ENCODE measurements at regions of chr3 and their contacts with region 1.

Region 1: DNA sequence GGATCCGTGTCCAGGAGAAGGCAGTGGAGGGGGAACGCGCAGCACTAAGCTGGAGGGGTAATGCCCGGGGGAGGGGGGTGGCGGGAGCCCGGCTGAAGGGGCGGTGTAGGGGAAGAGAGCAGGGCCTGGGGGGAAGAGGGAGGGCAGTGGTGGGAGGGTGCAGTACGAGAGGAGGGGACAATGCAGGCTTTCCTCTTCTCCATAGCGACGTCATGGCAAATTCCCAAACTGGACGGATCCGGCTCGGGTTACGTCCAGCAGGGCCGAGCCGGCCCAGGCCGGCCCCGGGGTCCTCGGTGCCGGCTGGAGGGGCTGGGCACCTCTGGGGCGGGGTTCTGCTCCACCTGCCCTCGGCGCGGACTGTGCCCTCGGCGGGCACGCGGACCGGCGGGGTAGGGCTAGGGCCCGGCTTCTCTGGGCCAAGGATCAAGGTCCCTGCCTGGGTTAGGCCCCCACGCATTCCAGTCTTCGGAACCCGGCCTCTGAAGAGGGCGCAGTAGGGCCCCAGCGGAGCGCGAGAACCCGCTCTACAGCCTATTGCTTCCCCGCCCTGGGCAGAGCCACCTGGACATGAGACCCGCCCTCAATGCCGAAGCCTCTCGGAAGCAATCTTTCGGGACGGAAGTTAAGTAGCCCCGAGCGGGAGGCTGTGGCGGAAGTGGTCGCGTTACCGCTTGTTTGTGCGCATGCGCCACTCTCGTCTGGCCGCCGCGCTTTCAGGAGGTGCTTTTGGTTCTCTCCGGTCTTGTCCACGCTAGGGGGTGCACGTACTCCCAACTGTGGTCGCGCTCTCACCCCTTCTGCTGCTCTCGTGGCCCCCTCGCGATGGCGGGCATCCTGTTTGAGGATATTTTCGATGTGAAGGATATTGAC is 1.4 kb downstream of the POLR2H start:
- DNase-seq: peak; percentile 99
- H3K4me3 ChIP-seq: peak overlapping the region; percentile 85
- H3K27ac ChIP-seq: peak overlapping the region; percentile 95
- H3K4me1 ChIP-seq: peaks cover 22% of the 10 kb centered on the region
- H3K27me3 ChIP-seq: no peaks in the 10 kb centered on the region
- CTCF ChIP-seq: peak; percentile 73

Region 2: DNA sequence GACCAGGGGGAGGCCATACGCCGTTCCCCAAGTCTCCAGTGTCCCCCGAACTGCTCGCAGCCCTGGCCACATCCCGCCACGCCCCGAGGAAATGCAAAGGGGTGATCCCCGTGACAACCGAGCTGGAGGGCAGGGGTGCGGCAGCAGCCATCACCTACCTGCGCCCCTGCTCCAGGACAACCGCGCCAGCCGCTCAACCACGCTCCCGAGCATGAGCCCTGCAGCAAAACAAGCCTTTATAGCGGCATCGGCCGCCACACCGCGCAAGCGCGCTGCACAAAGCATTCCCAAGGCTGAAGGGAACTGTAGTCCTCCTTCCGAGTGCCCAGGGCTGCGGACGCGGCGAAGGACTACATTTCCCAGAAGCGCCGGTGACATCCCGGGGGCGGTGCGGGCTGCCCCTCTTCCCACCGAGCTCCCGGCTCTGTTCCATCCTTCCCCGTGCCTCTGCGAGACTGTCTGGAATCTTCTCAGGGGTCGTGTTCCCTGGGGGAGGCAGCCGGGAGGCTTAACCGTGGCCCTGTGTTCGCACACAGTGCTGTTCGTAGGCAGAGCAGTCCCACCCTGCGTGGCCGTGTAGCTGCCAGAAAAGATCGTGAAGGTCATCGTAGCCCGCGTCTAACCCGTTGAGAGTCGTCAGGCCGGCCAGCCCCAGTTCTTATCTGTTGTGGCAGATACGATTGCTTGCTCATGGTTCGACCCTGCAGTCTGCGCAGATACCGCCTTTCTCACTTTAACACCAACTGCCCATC is 345.1 kb before region 1 on chr3 and contains the start of gene ABCC5:
- CTCF ChIA-PET with region 1: no interaction called
- POLR2A ChIA-PET with region 1: no interaction called
- intact Hi-C with region 1: loop called (anchors 5 kb)
- DNase-seq: peak; percentile 87 to 94
- H3K4me3 ChIP-seq: peak within 1 kb of the TSS; percentile 99
- H3K27ac ChIP-seq: peak within 1 kb of the TSS; percentile 58
- H3K4me1 ChIP-seq: peaks cover 34% of the 10 kb centered on the region
- H3K27me3 ChIP-seq: no peaks in the 10 kb centered on the region
- CTCF ChIP-seq: peak; percentile 83
- total RNA-seq, gene ABCC5: 133 and 151 TPM in 2 replicates

Region 3: DNA sequence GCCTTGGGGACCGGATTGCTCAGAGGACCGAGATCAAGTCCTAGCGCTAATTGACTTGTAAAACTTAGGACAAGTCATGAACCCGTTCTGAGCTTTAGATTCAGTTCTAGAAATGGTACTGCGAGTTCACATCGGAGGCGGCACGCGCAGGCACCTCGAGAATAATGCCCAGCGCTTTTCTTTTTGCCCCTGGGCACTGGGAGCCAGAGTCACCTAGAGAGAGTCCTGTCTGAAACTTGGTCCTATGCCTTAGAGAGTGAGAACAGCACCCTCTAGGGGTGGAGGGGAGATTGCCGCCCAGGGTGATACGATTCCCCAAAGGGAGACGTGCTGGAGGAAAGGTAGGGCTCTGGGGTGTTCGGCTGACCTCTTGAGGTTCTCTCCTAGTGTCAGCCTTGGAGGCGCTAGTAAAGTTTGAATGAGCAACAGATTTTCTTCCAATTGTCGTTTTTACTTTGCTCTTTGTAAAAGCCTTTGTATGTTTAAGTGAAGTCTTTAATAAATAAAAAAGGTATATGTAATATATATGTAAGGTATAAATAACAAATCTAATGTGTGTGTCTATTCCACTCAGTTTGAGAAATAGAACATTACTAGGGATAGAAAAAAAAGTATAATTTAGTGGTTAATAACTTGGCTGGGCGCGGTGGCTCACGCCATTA is 112.6 kb before region 1 on chr3:
- CTCF ChIA-PET with region 1: no interaction called
- POLR2A ChIA-PET with region 1: no interaction called
- intact Hi-C with region 1: loop called (anchors 2 kb)
- DNase-seq: peak; percentile 92 to 97
- H3K4me3 ChIP-seq: peak overlapping the region; percentile 96
- H3K27ac ChIP-seq: peak overlapping the region; percentile 90
- H3K4me1 ChIP-seq: peaks cover 18% of the 10 kb centered on the region
- H3K27me3 ChIP-seq: no peaks in the 10 kb centered on the region
- CTCF ChIP-seq: peak; percentile 97

Region 4: DNA sequence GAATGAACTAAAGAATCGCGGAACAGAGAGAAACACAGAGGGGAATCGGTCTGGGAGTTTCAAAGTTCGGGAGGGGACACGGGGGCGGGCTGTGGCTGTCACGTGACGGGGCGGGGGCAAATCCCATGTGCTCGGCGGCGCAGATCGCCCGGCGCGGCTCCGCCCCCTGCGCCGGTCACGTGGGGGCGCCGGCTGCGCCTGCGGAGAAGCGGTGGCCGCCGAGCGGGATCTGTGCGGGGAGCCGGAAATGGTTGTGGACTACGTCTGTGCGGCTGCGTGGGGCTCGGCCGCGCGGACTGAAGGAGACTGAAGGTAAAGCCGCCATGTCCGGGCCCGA is 48.6 kb before region 1 on chr3 and contains the start of gene EIF4G1:
- CTCF ChIA-PET with region 1: no interaction called
- POLR2A ChIA-PET with region 1: interaction called, 18 read pairs
- intact Hi-C with region 1: loop called (anchors 1 kb)
- DNase-seq: peak; percentile 82 to 98
- H3K4me3 ChIP-seq: peak within 1 kb of the TSS; percentile 63
- H3K27ac ChIP-seq: peak within 1 kb of the TSS; percentile 84
- H3K4me1 ChIP-seq: peaks cover 43% of the 10 kb centered on the region
- H3K27me3 ChIP-seq: no peaks in the 10 kb centered on the region
- CTCF ChIP-seq: no peak
- total RNA-seq, gene EIF4G1: 657 and 721 TPM in 2 replicates

Region 5: GRCh38 chr3:184335661-184336546 is 27.0 kb before region 1 on chr3:
- CTCF ChIA-PET with region 1: no interaction called
- POLR2A ChIA-PET with region 1: interaction called, 3 read pairs
- intact Hi-C with region 1: loop called (anchors 1 kb)
- DNase-seq: peak; percentile 53 to 89
- H3K4me3 ChIP-seq: peak overlapping the region; percentile 68
- H3K27ac ChIP-seq: peak overlapping the region; percentile 73
- H3K4me1 ChIP-seq: peaks cover 55% of the 10 kb centered on the region
- H3K27me3 ChIP-seq: no peaks in the 10 kb centered on the region
- CTCF ChIP-seq: no peak

Region 6: GRCh38 chr3:184380191-184380626 is 17.3 kb after region 1 on chr3:
- CTCF ChIA-PET with region 1: interaction called, 12 read pairs
- POLR2A ChIA-PET with region 1: no interaction called
- intact Hi-C with region 1: no loop called
- DNase-seq: peak in 1 of 2 experiments; percentile 46
- H3K4me3 ChIP-seq: no peak overlapping the region
- H3K27ac ChIP-seq: no peak overlapping the region
- H3K4me1 ChIP-seq: no peaks in the 10 kb centered on the region
- H3K27me3 ChIP-seq: peaks cover 77% of the 10 kb centered on the region
- CTCF ChIP-seq: no peak